ENCODE measurements at regions of chr5 and their contacts with region 1.

Region 1: GRCh38 chr5:82312373-82312856 is 34.3 kb upstream of the RPS23 start:
- DNase-seq: peak; percentile 85
- H3K4me3 Mint-ChIP-seq: no peak overlapping the region
- H3K27ac Mint-ChIP-seq: no peak overlapping the region
- H3K4me1 Mint-ChIP-seq: peaks cover 2% of the 10 kb centered on the region
- H3K27me3 Mint-ChIP-seq: no peaks in the 10 kb centered on the region

Region 2: GRCh38 chr5:82137205-82137604 is 175.2 kb before region 1 on chr5:
- intact Hi-C with region 1: no loop called
- DNase-seq: no peak
- H3K4me3 Mint-ChIP-seq: no peak overlapping the region
- H3K27ac Mint-ChIP-seq: no peak overlapping the region
- H3K4me1 Mint-ChIP-seq: no peaks in the 10 kb centered on the region
- H3K27me3 Mint-ChIP-seq: no peaks in the 10 kb centered on the region

Region 3: GRCh38 chr5:83430130-83431010 is 1118.0 kb after region 1 on chr5:
- intact Hi-C with region 1: loop called (anchors 2 kb)
- DNase-seq: peak; percentile 87
- H3K4me3 Mint-ChIP-seq: no peak overlapping the region
- H3K27ac Mint-ChIP-seq: no peak overlapping the region
- H3K4me1 Mint-ChIP-seq: no peaks in the 10 kb centered on the region
- H3K27me3 Mint-ChIP-seq: peaks cover 3% of the 10 kb centered on the region

Region 4: DNA sequence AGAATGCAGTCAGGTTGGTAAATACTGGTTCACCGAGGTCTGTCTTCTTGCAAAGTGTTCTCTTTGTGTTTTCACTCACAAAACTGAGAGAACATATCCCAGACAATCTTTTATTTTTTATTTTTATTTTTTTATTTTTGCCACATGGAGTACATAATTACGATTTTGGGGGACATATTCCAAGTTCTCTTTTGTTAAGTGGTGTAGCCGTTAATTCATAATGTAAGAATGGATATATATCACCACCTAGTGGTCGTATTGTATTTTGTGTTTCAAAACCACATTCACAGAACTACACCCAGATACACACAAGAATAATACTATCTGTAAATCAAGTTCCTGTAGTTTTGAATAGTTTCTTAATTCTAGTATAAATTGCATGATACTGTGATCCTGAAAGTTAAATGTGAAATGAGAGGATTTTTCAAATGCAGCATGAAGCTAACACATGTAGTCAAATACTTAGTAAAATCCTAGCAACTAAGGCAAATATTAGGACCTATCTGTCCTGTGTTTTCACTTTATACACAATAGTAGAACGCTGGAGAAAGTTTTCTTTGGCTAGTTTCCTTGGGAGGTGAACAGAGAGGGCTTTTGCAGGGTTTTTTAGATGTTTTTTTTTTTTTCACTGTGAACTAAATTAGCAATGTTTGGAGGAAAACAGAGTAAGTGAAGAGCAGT is 1251.8 kb after region 1 on chr5:
- intact Hi-C with region 1: loop called (anchors 1 kb)
- DNase-seq: no peak
- H3K4me3 Mint-ChIP-seq: no peak overlapping the region
- H3K27ac Mint-ChIP-seq: no peak overlapping the region
- H3K4me1 Mint-ChIP-seq: no peaks in the 10 kb centered on the region
- H3K27me3 Mint-ChIP-seq: peaks cover 32% of the 10 kb centered on the region